HepG2 (cell line): ENCODE measurements at regions of chr16 and their contacts with region 1.

Region 1: DNA sequence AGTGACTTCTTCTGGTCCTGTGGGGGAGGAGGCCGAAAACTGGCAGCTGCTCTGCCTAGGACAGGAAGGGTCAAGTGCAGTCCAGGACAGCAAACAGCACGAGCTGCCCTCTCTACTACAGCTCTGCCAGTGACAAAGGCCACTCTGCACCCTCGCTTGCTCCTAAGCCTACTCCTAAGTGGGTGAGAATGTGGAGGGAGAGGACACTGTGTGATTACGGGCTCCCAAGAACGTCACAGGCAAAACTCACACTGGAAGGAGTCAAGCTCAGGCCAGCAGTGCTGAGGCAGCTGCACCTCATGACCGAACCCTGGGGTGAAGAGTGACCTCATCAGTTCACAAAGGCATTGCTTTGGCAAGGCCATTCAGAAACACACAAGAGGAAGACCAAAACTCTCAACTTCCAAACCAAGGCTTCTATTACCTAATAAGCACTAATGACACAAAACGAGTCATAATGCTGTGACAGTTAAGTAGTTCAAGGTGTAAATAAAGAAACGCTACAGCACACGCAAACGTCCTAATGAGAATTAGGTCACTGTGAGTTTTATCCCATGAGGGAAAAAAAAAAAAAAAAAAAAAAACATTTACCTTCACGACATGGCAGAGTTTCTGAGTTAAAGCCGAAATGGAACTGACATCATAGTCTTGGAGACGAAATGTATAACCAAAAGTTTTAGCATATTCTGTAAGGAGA is 35.1 kb downstream of the MARF1 start:
- DNase-seq: peak; percentile 67
- ATAC-seq: peak; percentile 67
- H3K4me3 ChIP-seq: no peak overlapping the region
- H3K27ac ChIP-seq: peak overlapping the region; percentile 58
- H3K4me1 ChIP-seq: peaks cover 66% of the 10 kb centered on the region
- H3K27me3 ChIP-seq: no peaks in the 10 kb centered on the region
- CTCF ChIP-seq: 0 out of 2 replicates have a peak, but pooled peaks have one; percentile 18
- EP300 ChIP-seq: no peak
- POLR2A ChIP-seq: no peak
- RAD21 ChIP-seq: no peak

Region 2: GRCh38 chr16:15592324-15592723 is 15.5 kb before region 1 on chr16:
- CTCF ChIA-PET with region 1: no interaction called
- POLR2A ChIA-PET with region 1: interaction called, 46 read pairs
- in situ Hi-C with region 1: no loop called
- intact Hi-C with region 1: loop called (anchors 2 kb)
- DNase-seq: no peak
- ATAC-seq: no peak
- H3K4me3 ChIP-seq: no peak overlapping the region
- H3K27ac ChIP-seq: no peak overlapping the region
- H3K4me1 ChIP-seq: peaks cover 46% of the 10 kb centered on the region
- H3K27me3 ChIP-seq: no peaks in the 10 kb centered on the region
- CTCF ChIP-seq: no peak
- EP300 ChIP-seq: no peak
- POLR2A ChIP-seq: no peak
- RAD21 ChIP-seq: no peak

Region 3: DNA sequence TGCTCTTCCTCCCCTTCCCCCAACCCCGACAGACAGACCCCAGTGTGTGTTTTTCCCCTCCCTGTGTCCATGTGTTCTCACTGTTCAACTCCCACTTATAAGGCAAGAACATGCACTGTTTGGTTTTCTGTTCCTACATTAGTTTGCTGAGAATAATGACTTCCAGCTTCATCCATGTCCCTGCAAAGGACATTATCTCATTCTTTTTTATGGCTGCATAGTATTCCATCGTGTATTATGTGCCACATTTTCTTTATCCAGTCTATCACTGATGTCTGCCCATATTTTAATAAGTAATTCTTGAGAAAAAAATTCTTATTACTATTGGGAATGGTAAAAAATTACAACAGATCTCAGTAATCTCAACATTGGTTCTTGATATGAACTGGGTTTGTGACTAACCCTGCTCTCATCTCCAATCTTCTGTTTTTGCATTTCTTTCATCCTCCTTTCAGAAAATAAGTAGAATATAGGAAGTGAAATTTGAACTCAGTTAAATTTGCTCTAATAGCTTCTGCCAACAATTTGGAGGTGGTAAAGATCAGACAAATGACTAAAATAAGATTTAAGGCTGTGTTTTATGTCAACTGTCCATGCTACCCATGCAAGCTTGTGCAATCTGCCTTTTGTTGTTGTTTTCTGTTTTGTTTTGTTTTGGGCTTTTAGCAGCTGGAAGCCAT is 24.0 kb after region 1 on chr16:
- CTCF ChIA-PET with region 1: no interaction called
- POLR2A ChIA-PET with region 1: interaction called, 10 read pairs
- in situ Hi-C with region 1: no loop called
- intact Hi-C with region 1: no loop called
- DNase-seq: no peak
- ATAC-seq: no peak
- H3K4me3 ChIP-seq: no peak overlapping the region
- H3K27ac ChIP-seq: no peak overlapping the region
- H3K4me1 ChIP-seq: peaks cover 36% of the 10 kb centered on the region
- H3K27me3 ChIP-seq: no peaks in the 10 kb centered on the region
- CTCF ChIP-seq: no peak
- EP300 ChIP-seq: no peak
- POLR2A ChIP-seq: no peak
- RAD21 ChIP-seq: no peak